H1 (cell line): ENCODE measurements at regions of chr7 and their contacts with region 1.

Region 1: DNA sequence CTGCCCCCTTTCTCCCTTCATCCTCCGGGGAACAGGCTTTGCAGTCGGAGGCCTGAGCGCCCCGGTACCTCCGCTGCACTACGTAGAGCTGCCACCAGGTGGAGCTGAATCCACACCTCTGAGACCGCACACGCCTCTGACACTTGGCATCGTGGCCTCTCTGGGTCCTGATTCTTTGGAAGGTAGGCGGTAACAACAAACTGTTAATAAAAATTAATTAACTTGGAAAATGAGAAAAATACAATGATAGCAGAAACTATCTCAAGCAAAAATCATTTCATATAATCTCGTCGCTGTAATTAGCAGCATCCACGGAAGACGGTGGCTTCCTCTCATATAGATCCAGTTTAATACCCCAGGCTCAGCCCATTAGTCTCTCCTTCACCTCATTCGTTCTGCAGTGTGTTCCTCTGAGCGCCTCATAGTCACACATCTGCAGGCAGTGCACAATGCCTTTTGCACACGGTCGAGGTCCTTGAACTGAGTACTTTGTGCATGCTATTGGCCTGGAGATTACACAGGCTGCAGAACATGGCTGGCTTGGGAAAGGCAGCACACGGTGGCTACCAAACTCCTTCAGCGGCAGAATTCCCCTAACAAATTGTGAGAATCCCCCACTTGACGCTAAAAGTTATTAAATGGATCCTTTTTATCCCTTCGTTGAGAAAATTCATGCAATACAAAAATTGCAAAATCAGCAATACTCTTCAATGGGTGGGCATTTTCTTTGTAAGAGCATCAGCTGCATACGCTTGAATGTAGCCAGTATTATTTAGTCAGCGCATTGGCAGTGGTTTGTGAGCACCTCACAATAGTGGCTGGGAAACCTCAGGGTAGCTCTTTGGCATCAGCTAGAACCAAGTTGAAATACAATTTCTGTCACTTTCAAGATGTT is 18.7 kb downstream of the OR9A2 start:
- DNase-seq: peak; percentile 61 to 96
- H3K4me3 ChIP-seq: no peak overlapping the region
- H3K27ac ChIP-seq: no peak overlapping the region
- H3K4me1 ChIP-seq: no peaks in the 10 kb centered on the region
- H3K27me3 ChIP-seq: no peaks in the 10 kb centered on the region
- CTCF ChIP-seq: peak; percentile 89 to 98 (median 95)
- EP300 ChIP-seq: no peak
- POLR2A ChIP-seq: no peak
- RAD21 ChIP-seq: peak; percentile 98 to 99

Region 2: GRCh38 chr7:142603870-142604448 is 404.3 kb before region 1 on chr7:
- CTCF ChIA-PET with region 1: interaction called, 15 read pairs
- POLR2A ChIA-PET with region 1: no interaction called
- DNase-seq: peak in 1 of 2 experiments; percentile 58
- H3K4me3 ChIP-seq: peak overlapping the region in 1 of 4 experiments; percentile 43; a peak in 1 of 8 replicates
- H3K27ac ChIP-seq: no peak overlapping the region
- H3K4me1 ChIP-seq: no peaks in the 10 kb centered on the region
- H3K27me3 ChIP-seq: no peaks in the 10 kb centered on the region
- CTCF ChIP-seq: peak in 2 of 3 experiments; percentile 75 to 77; a peak in 3 of 4 replicates
- EP300 ChIP-seq: no peak
- POLR2A ChIP-seq: no peak
- RAD21 ChIP-seq: peak; percentile 86

Region 3: GRCh38 chr7:142819530-142819929 is 188.7 kb before region 1 on chr7:
- CTCF ChIA-PET with region 1: no interaction called
- POLR2A ChIA-PET with region 1: no interaction called
- DNase-seq: no peak
- H3K4me3 ChIP-seq: no peak overlapping the region
- H3K27ac ChIP-seq: no peak overlapping the region
- H3K4me1 ChIP-seq: peaks cover 0 to under 1% (median 0%) of the 10 kb centered on the region in 4 experiments; a peak in 2 of 7 replicates
- H3K27me3 ChIP-seq: no peaks in the 10 kb centered on the region
- CTCF ChIP-seq: no peak
- EP300 ChIP-seq: no peak
- POLR2A ChIP-seq: no peak
- RAD21 ChIP-seq: no peak

Region 4: DNA sequence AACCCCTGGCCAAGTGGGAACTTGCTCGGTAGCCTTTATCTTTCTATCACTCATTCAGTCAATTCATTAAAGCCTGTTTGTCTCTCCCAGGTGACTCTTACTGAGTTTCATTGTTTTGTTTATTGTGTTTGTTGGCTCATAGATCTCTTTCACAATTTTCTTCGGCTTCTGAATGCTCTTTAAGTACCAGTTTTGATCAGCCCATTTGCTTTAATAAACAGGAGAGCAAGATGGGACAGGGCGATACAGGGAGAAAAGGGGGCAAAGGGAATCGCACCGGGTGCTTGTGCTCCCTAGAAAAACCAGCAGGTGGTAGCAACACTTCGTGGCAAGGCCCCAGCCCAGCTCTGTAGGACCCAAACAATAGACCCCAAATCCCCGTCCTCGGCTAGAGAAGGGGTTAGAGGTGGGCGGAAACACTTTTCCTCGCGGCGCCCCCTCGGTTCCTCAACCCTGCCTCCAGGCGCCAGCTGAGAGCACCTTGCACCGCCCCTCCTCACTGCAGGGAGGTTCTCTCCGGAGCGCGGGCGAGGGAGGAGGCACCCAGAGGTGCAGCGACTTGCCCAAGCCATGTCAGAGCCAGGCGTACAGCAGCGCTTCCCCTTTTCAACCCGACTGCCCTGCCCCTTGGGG is 154.4 kb before region 1 on chr7:
- CTCF ChIA-PET with region 1: interaction called, 14 read pairs
- POLR2A ChIA-PET with region 1: no interaction called
- DNase-seq: peak; percentile 49 to 72
- H3K4me3 ChIP-seq: peak overlapping the region; percentile 83 to 97 (median 92)
- H3K27ac ChIP-seq: no peak overlapping the region
- H3K4me1 ChIP-seq: peaks cover 0 to 12% (median 4%) of the 10 kb centered on the region in 4 experiments; a peak in 4 of 7 replicates
- H3K27me3 ChIP-seq: peaks cover 0 to 12% (median 6%) of the 10 kb centered on the region in 4 experiments; a peak in 4 of 7 replicates
- CTCF ChIP-seq: peak; percentile 68 to 84 (median 79)
- EP300 ChIP-seq: no peak
- POLR2A ChIP-seq: no peak
- RAD21 ChIP-seq: peak; percentile 77 to 87

Region 5: GRCh38 chr7:142886477-142887265 is 121.6 kb before region 1 on chr7:
- CTCF ChIA-PET with region 1: interaction called, 332 read pairs
- POLR2A ChIA-PET with region 1: no interaction called
- DNase-seq: no peak
- H3K4me3 ChIP-seq: no peak overlapping the region
- H3K27ac ChIP-seq: no peak overlapping the region
- H3K4me1 ChIP-seq: peaks cover 0 to 10% (median 2%) of the 10 kb centered on the region in 4 experiments; a peak in 2 of 7 replicates
- H3K27me3 ChIP-seq: no peaks in the 10 kb centered on the region
- CTCF ChIP-seq: no peak
- EP300 ChIP-seq: no peak
- POLR2A ChIP-seq: no peak
- RAD21 ChIP-seq: no peak

Region 6: GRCh38 chr7:142916508-142916907 is 91.7 kb before region 1 on chr7:
- CTCF ChIA-PET with region 1: interaction called, 14 read pairs
- POLR2A ChIA-PET with region 1: no interaction called
- DNase-seq: no peak
- H3K4me3 ChIP-seq: no peak overlapping the region
- H3K27ac ChIP-seq: no peak overlapping the region
- H3K4me1 ChIP-seq: no peaks in the 10 kb centered on the region
- H3K27me3 ChIP-seq: no peaks in the 10 kb centered on the region
- CTCF ChIP-seq: no peak
- EP300 ChIP-seq: no peak
- POLR2A ChIP-seq: no peak
- RAD21 ChIP-seq: no peak

Region 7: DNA sequence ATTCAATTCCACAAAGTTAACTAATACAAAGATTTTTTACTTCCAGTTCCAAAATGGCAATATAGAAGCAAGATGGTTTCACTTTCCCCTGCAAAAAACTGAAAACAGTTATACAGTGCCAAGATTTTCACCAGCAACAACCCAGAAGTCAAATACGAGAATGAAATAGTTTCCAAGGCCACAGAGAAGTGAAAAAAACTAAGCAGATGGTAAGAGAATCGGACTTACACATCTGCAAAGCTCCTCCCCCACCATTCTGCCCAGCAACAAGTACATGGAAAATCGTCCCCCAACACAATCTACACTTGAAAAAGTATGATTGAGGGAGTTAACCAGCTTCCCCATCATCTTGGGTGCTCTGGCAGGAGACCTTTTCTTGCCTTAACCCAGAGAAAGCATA is 15.8 kb before region 1 on chr7:
- CTCF ChIA-PET with region 1: interaction called, 33 read pairs
- POLR2A ChIA-PET with region 1: no interaction called
- DNase-seq: no peak
- H3K4me3 ChIP-seq: no peak overlapping the region
- H3K27ac ChIP-seq: no peak overlapping the region
- H3K4me1 ChIP-seq: no peaks in the 10 kb centered on the region
- H3K27me3 ChIP-seq: no peaks in the 10 kb centered on the region
- CTCF ChIP-seq: no peak
- EP300 ChIP-seq: no peak
- POLR2A ChIP-seq: no peak
- RAD21 ChIP-seq: no peak

Region 8: DNA sequence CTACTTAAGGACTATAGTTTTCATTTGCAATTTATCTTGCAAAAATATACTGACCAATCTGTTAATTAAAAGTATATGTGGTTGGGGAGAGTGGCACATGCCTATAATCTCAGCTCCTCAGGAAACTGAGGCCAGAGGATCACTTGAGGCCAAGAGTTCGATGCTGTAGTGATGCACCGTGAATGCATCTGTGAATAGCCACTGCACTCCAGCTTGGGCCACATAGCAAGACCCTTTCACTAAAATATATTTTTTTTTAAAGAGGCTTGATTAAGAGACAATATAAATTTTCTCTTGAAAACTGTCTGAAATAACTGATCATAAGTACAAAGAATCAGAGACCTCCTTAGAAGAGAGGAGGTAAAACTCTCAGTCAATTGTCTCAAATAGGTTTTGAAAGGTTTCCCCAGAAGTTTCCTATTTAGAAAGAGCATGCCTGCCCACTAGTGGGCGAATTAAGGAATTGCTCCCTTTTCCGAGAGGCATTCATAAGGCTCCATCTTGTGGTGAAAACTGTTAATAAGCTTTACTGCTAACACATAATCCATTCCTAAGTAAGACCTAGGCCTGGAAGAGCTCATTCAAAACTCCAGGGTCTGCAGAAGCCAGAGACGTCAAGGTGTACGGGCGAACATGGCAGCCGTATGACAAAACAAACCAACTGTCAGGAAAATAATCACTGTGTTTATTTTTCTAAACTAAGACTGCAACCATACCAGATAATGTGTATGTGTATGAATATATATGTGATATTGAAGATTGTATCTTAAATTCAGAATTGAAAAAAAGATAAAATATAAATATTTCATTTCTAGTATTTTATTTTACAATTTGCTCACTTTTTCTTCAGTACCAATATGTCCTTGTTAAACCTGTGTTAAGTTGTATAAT is 206.8 kb after region 1 on chr7:
- CTCF ChIA-PET with region 1: interaction called, 480 read pairs
- POLR2A ChIA-PET with region 1: no interaction called
- DNase-seq: peak; percentile 49 to 66
- H3K4me3 ChIP-seq: no peak overlapping the region
- H3K27ac ChIP-seq: no peak overlapping the region
- H3K4me1 ChIP-seq: no peaks in the 10 kb centered on the region
- H3K27me3 ChIP-seq: no peaks in the 10 kb centered on the region
- CTCF ChIP-seq: peak in 2 of 3 experiments; percentile 99 to 100; a peak in 3 of 4 replicates
- EP300 ChIP-seq: no peak
- POLR2A ChIP-seq: no peak
- RAD21 ChIP-seq: peak; percentile 100